Activated naive CD4-positive, alpha-beta T cell treated with anti-CD3 and anti-CD28 coated beads for 36 hours (primary cell): ENCODE measurements at regions of chr5 and their contacts with region 1.

Region 1: DNA sequence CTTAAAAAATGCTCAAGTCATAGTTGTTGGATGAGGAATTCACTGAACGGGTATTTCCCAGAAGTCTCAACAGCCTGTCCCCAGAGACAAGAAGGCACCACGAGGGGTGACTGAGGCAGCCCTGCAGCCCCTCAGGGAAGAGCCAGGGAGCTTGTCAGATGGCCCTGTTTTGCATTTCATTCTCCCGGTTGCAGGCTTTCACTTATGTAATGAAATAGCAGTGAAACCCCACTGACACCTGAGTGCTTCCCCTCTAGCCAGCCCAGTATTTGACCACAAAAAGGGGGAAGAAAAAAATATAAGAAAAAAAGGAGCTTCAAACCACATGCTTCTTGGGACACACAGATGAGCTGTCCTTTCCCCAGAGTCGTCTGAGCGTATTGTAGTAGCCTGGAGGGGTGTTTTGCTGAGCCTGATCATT is 75.3 kb upstream of the IL12B start:
- DNase-seq: no peak
- H3K4me3 Mint-ChIP-seq: no peak overlapping the region
- H3K27ac Mint-ChIP-seq: no peak overlapping the region
- H3K4me1 Mint-ChIP-seq: peaks cover 19% of the 10 kb centered on the region
- H3K27me3 Mint-ChIP-seq: peaks cover 11% of the 10 kb centered on the region

Region 2: DNA sequence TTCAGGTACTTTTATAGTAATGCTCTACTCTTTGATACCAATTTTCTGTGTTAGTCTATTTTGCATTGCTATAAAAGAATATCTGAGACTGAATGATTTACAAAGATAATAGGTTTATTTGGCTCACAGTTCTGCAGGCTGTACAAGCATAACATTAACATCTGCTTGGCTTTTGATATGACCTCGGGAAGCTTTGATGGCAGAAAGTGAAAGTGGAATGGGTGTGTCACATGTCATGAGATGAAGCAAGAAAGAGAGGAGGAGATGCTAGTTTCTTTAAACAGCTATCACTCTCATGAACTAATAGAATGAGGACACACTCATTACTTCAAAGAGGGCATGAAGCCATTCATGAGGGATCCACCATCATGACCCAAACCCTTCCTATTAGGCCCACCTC is 195.6 kb after region 1 on chr5:
- CTCF ChIA-PET with region 1: no interaction called
- intact Hi-C with region 1: loop called (anchors 2 kb)
- DNase-seq: peak; percentile 37
- H3K4me3 Mint-ChIP-seq: no peak overlapping the region
- H3K27ac Mint-ChIP-seq: no peak overlapping the region
- H3K4me1 Mint-ChIP-seq: peaks cover 8% of the 10 kb centered on the region
- H3K27me3 Mint-ChIP-seq: peaks cover 2% of the 10 kb centered on the region

Region 3: GRCh38 chr5:159850160-159850559 is 444.5 kb after region 1 on chr5:
- CTCF ChIA-PET with region 1: no interaction called
- intact Hi-C with region 1: no loop called
- DNase-seq: no peak
- H3K4me3 Mint-ChIP-seq: no peak overlapping the region
- H3K27ac Mint-ChIP-seq: no peak overlapping the region
- H3K4me1 Mint-ChIP-seq: no peaks in the 10 kb centered on the region
- H3K27me3 Mint-ChIP-seq: peaks cover 6% of the 10 kb centered on the region